Psoas muscle (tissue), 8 donors: ENCODE measurements at regions of chr3 and their contacts with region 1.

Region 1: GRCh38 chr3:49906004-49906743 is 2.5 kb upstream of the MST1R start:
- DNase-seq: peak in 1 of 2 donors; percentile 32
- ATAC-seq: peak; percentile 35 to 69 (median 51)
- H3K4me3 ChIP-seq: peak overlapping the region; percentile 39
- H3K27ac ChIP-seq: no peak overlapping the region
- H3K4me1 ChIP-seq: peaks cover 7% of the 10 kb centered on the region
- H3K27me3 ChIP-seq: no peaks in the 10 kb centered on the region
- CTCF ChIP-seq: peak; percentile 58

Region 2: GRCh38 chr3:49703443-49703927 is 202.7 kb before region 1 on chr3:
- intact Hi-C with region 1: loop called in 1 of 2 experiments (anchors 5 kb)
- DNase-seq: peak; percentile 63 to 83
- ATAC-seq: peak; percentile 84 to 91 (median 88)
- H3K4me3 ChIP-seq: no peak overlapping the region
- H3K27ac ChIP-seq: no peak overlapping the region
- H3K4me1 ChIP-seq: no peaks in the 10 kb centered on the region
- H3K27me3 ChIP-seq: no peaks in the 10 kb centered on the region
- CTCF ChIP-seq: peak; percentile 86

Region 3: GRCh38 chr3:49786241-49786958 is 119.8 kb before region 1 on chr3 and contains the start of gene IP6K1:
- intact Hi-C with region 1: no loop called
- DNase-seq: peak; percentile 100
- ATAC-seq: peak; percentile 99 to 100 (median 100)
- H3K4me3 ChIP-seq: peak within 1 kb of the TSS; percentile 96
- H3K27ac ChIP-seq: peak within 1 kb of the TSS; percentile 96
- H3K4me1 ChIP-seq: peaks cover 20% of the 10 kb centered on the region
- H3K27me3 ChIP-seq: no peaks in the 10 kb centered on the region
- CTCF ChIP-seq: no peak
- total RNA-seq, gene IP6K1: 11.6 to 16.1 (median 13.1) TPM

Region 4: GRCh38 chr3:49802719-49803464 is 103.3 kb before region 1 on chr3 and contains the start of gene INKA1:
- intact Hi-C with region 1: loop called (anchors 5 kb)
- DNase-seq: peak; percentile 90 to 94
- ATAC-seq: peak; percentile 83 to 89 (median 84)
- H3K4me3 ChIP-seq: peak within 1 kb of the TSS; percentile 76
- H3K27ac ChIP-seq: peak within 1 kb of the TSS; percentile 93
- H3K4me1 ChIP-seq: peaks cover 38% of the 10 kb centered on the region
- H3K27me3 ChIP-seq: no peaks in the 10 kb centered on the region
- CTCF ChIP-seq: peak; percentile 88
- total RNA-seq, gene INKA1: 2.2 to 20.1 (median 3.6) TPM